Uterus (tissue), 4 donors: ENCODE measurements at regions of chr12 and their contacts with region 1.

Region 1: GRCh38 chr12:118372541-118373495 is at the start of gene TAOK3:
- DNase-seq: peak; percentile 98 to 99
- H3K4me3 ChIP-seq: peak within 1 kb of the TSS; percentile 78 to 89
- H3K27ac ChIP-seq: peak within 1 kb of the TSS; percentile 94 to 97
- H3K4me1 ChIP-seq: peaks cover 0 to 7% of the 10 kb centered on the region in 2 donors
- H3K27me3 ChIP-seq: no peaks in the 10 kb centered on the region
- CTCF ChIP-seq: peak in 2 of 4 experiments; percentile 7 to 8
- POLR2A ChIP-seq: peak; percentile 80 to 93
- total RNA-seq, gene TAOK3: 14.9 to 35.1 (median 24.8) TPM

Region 2: DNA sequence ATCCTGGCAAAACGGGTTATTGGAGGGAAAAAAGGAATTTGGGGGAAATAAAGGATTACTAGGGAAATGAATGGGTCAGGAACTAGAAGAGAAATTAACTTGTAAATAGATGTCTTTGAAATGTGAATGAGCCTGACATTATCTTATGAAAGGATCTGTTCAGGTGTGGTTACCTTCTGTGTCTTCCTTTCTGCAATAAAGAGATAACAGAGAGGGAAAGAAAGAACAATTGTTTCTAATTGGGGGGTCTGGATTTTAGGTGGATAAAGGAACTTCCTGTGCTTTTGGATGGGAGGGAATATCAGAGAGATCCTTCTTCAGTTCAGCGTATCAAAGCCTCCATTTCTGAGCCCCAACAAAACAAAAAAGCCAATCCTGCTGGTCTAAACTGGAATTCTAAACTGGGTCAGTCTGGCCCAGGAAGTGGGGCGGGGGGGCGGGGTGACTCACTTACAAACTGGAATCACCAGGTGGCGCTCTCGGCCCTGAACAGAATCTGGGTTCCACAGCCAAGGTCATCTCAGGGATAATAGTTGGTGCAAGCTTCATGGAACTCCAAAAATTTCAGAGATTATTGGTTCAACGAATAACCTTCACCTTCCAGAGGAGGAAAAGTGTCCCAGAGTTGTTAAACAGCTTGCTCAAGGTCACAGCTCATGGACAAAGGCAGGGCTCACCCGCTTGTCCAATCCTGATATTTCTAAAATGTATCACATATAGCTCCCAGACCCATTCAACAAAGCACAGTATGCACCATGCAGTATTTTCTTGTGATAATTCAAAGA is 252.0 kb before region 1 on chr12:
- intact Hi-C with region 1: loop called (anchors 10 kb)
- DNase-seq: peak; percentile 63 to 74
- H3K4me3 ChIP-seq: no peak overlapping the region
- H3K27ac ChIP-seq: peak overlapping the region in 1 of 2 donors; percentile 49
- H3K4me1 ChIP-seq: no peaks in the 10 kb centered on the region
- H3K27me3 ChIP-seq: no peaks in the 10 kb centered on the region
- CTCF ChIP-seq: peak; percentile 13 to 77 (median 36)
- POLR2A ChIP-seq: no peak

Region 3: DNA sequence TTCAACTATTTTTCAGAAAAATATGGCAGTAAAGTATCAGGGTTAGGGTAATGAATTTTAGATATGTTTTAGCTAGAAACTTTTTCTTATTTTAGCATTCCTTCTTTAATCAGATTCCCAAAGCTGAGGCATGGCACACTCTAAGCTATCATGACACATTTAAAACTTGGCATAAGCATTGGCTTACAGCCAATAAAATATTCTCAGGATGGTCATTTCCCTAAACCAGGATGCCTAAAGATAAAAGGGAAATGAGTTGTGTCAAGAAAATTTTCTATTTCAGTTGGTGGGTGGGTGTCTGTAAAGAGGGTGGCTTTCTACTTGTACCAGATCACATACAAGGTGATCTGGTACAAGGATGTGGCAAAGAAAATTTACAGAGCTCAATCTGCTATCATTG is 189.1 kb before region 1 on chr12:
- intact Hi-C with region 1: loop called (anchors 5 kb)
- DNase-seq: no peak
- H3K4me3 ChIP-seq: no peak overlapping the region
- H3K27ac ChIP-seq: no peak overlapping the region
- H3K4me1 ChIP-seq: no peaks in the 10 kb centered on the region
- H3K27me3 ChIP-seq: no peaks in the 10 kb centered on the region
- CTCF ChIP-seq: no peak
- POLR2A ChIP-seq: no peak

Region 4: GRCh38 chr12:118288174-118288573 is 84.6 kb before region 1 on chr12:
- intact Hi-C with region 1: no loop called
- DNase-seq: no peak
- H3K4me3 ChIP-seq: no peak overlapping the region
- H3K27ac ChIP-seq: no peak overlapping the region
- H3K4me1 ChIP-seq: no peaks in the 10 kb centered on the region
- H3K27me3 ChIP-seq: no peaks in the 10 kb centered on the region
- CTCF ChIP-seq: no peak
- POLR2A ChIP-seq: no peak

Region 5: GRCh38 chr12:118590406-118591150 is 217.8 kb after region 1 on chr12:
- intact Hi-C with region 1: no loop called
- DNase-seq: no peak
- H3K4me3 ChIP-seq: no peak overlapping the region
- H3K27ac ChIP-seq: no peak overlapping the region
- H3K4me1 ChIP-seq: no peaks in the 10 kb centered on the region
- H3K27me3 ChIP-seq: no peaks in the 10 kb centered on the region
- CTCF ChIP-seq: no peak
- POLR2A ChIP-seq: no peak